Esophagus muscularis mucosa (tissue), 4 donors: ENCODE measurements at regions of chr3 and their contacts with region 1.

Region 1: DNA sequence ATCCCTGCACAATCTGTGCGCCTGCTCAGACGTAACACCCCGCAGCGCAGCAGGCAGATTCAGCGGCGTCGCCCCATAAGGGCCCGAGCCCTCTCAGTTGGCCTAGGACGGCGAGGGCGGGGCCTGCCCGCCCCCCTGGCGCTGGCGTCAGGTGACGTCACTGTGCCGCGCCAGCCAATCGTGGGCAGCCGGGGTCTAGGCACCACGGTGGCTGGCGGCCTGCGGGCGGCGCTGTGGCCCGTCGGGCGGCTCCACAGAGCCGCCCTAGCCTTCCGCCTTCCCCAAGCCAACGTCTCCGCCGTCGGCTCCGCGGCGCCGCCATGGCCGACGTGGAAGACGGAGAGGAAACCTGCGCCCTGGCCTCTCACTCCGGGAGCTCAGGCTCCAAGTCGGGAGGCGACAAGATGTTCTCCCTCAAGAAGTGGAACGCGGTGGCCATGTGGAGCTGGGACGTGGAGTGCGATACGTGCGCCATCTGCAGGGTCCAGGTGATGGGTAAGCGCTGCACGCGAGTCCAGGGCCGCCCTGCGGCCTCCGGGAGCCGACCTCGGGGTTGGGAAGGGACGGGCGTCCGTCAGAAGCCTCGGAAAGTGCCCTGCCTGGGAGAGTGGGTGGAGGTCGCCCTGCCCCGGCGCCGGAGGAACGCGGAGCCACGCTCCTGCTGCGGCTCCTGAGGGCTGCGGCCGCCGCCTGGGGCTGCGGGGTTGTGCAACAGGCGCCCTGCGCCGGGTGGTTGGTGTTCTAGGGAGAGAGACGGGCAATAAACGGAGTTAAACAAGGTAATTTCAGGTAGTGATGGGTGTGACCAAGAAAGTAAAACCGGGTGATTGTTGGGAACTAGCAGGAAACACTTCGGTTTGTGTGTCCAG is at the start of gene RNF7:
- DNase-seq: peak; percentile 98
- H3K4me3 ChIP-seq: peak within 1 kb of the TSS; percentile 77 to 89 (median 84)
- H3K27ac ChIP-seq: peak within 1 kb of the TSS; percentile 94 to 96 (median 96)
- H3K4me1 ChIP-seq: peaks cover 30 to 40% (median 35%) of the 10 kb centered on the region in 4 donors
- H3K27me3 ChIP-seq: no peaks in the 10 kb centered on the region
- CTCF ChIP-seq: peak; percentile 90 to 95 (median 94)
- EP300 ChIP-seq: no peak
- POLR2A ChIP-seq: peak; percentile 2
- total RNA-seq, gene RNF7: 47.2 to 107 (median 80.2) TPM

Region 2: GRCh38 chr3:141575879-141576743 is 162.1 kb before region 1 on chr3:
- intact Hi-C with region 1: loop called (anchors 5 kb)
- DNase-seq: no peak
- H3K4me3 ChIP-seq: no peak overlapping the region
- H3K27ac ChIP-seq: no peak overlapping the region
- H3K4me1 ChIP-seq: no peaks in the 10 kb centered on the region
- H3K27me3 ChIP-seq: no peaks in the 10 kb centered on the region
- CTCF ChIP-seq: peak; percentile 53 to 67 (median 61)
- EP300 ChIP-seq: no peak
- POLR2A ChIP-seq: no peak

Region 3: DNA sequence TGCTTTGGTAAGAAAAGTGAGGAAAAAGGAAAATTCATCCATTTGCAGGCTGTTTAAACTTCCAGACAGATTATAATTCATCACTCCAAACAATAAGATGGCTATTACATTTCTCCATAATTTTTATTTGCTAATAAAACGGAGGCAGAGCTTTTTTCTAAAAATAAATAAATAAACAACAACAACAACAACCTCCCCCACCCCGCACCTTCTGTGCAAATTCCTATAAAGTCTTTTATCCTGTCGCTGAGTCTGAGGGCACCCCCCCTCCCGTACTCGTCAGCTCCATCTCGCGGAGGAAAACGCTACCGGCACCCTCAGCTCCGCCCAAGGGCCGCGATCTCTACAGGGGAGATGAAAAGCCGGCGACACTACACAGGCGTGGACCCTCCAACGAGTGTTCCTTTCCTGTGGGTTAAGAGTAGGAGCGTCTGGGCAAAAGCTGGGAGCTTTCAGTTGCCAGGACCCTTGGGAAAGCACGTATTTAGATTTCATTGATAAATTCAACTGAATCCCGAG is 137.2 kb after region 1 on chr3:
- intact Hi-C with region 1: loop called (anchors 1 kb)
- DNase-seq: peak; percentile 97
- H3K4me3 ChIP-seq: peak overlapping the region; percentile 83 to 95 (median 93)
- H3K27ac ChIP-seq: peak overlapping the region; percentile 99 to 100 (median 100)
- H3K4me1 ChIP-seq: peaks cover 26 to 28% (median 27%) of the 10 kb centered on the region in 4 donors
- H3K27me3 ChIP-seq: no peaks in the 10 kb centered on the region
- CTCF ChIP-seq: peak; percentile 83 to 92 (median 89)
- EP300 ChIP-seq: no peak
- POLR2A ChIP-seq: no peak